Activated CD4-positive, alpha-beta T cell treated with anti-CD3 and anti-CD28 coated beads, Interleukin-2, amount 10 ng/mL, durations not matched to agents 24 days and 14 days (primary cell): ENCODE measurements at regions of chr4 and their contacts with region 1.

Region 1: GRCh38 chr4:3106339-3107186 is 32.1 kb downstream of the HTT start:
- DNase-seq: peak; percentile 96
- H3K4me3 Mint-ChIP-seq: no peak overlapping the region
- H3K27ac Mint-ChIP-seq: peak overlapping the region; percentile 7
- H3K4me1 Mint-ChIP-seq: peaks cover 13% of the 10 kb centered on the region
- H3K27me3 Mint-ChIP-seq: no peaks in the 10 kb centered on the region

Region 2: GRCh38 chr4:3074078-3074795 is 32.3 kb before region 1 on chr4 and contains the starts of genes HTT and HTT-AS:
- intact Hi-C with region 1: loop called (anchors 1 kb)
- DNase-seq: peak; percentile 97
- H3K4me3 Mint-ChIP-seq: peak within 1 kb of the TSS; percentile 96
- H3K27ac Mint-ChIP-seq: peak within 1 kb of the TSS; percentile 91
- H3K4me1 Mint-ChIP-seq: peaks cover 19% of the 10 kb centered on the region
- H3K27me3 Mint-ChIP-seq: no peaks in the 10 kb centered on the region
- total RNA-seq, gene HTT: 67.4 and 70.6 TPM in 2 replicates
- total RNA-seq, gene HTT-AS: not detected in 2 replicates

Region 3: GRCh38 chr4:3122081-3122563 is 15.6 kb after region 1 on chr4:
- intact Hi-C with region 1: loop called (anchors 1 kb)
- DNase-seq: no peak
- H3K4me3 Mint-ChIP-seq: peak overlapping the region; percentile 8
- H3K27ac Mint-ChIP-seq: peak overlapping the region; percentile 59
- H3K4me1 Mint-ChIP-seq: peaks cover 19% of the 10 kb centered on the region
- H3K27me3 Mint-ChIP-seq: no peaks in the 10 kb centered on the region

Region 4: GRCh38 chr4:3201718-3202702 is 95.4 kb after region 1 on chr4:
- intact Hi-C with region 1: loop called (anchors 5 kb)
- DNase-seq: peak; percentile 94
- H3K4me3 Mint-ChIP-seq: peak overlapping the region; percentile 47
- H3K27ac Mint-ChIP-seq: peak overlapping the region; percentile 96
- H3K4me1 Mint-ChIP-seq: peaks cover 37% of the 10 kb centered on the region
- H3K27me3 Mint-ChIP-seq: no peaks in the 10 kb centered on the region

Region 5: DNA sequence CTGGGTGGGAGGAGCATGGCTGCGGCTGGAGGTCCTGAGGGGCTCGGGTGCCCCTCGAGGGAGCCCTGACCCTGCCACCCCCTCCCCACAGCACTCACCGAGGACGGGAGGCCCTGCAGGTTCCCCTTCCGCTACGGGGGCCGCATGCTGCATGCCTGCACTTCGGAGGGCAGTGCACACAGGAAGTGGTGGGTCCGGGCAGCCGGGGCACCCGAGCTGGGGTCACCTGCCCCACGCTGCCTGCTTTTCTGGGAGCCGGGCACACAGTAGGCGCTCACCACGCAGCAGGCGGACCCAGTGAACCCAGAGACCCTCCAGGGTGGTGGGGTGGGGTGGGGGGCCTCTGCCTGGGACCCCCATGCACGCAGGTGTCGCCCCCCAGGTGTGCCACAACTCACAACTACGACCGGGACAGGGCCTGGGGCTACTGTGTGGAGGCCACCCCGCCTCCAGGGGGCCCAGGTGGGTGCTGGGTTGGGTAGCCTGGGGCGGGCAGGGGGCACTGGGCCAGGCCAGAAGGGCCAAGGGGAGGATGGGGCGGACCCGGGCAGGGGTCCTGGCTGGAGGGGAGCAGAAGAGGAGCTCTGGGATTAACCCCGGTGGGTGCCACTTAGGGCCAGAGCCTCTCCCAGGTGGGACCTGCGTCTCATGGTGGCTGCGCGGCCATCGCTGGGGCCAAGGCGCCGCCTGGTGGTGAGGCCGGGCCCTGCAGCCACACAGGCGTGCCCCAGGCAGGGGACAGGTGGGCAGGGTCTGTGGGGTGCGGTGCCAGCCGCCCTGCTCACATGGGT is 336.6 kb after region 1 on chr4:
- intact Hi-C with region 1: loop called (anchors 1 kb)
- DNase-seq: peak; percentile 92
- H3K4me3 Mint-ChIP-seq: no peak overlapping the region
- H3K27ac Mint-ChIP-seq: no peak overlapping the region
- H3K4me1 Mint-ChIP-seq: no peaks in the 10 kb centered on the region
- H3K27me3 Mint-ChIP-seq: no peaks in the 10 kb centered on the region